Heart left ventricle (tissue), 16 donors: ENCODE measurements at regions of chr4 and their contacts with region 1.

Region 1: DNA sequence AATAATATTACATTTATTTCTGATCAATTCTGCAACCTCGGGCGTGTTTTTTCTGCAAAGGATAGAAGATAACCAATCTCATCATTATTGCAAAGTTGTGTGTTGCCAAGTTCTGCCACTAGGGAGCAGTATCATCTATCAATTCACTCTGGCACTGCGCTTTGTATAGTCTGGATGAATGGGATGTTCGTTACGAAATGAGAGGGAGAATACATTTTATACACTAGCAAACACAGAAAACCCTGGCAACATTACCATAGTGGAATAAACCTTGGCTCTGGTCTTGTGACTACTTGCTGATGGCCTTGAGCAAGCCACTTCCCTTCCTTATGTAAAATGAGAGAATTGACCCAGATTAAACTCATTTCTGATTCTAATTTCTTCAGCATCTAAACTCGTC is 97.5 kb upstream of the ZNF518B start:
- DNase-seq: peak in 2 of 5 donors; percentile 16 to 23
- ATAC-seq: peak in 3 of 4 donors; percentile 37 to 74 (median 67)
- H3K4me3 ChIP-seq: no peak overlapping the region
- H3K27ac ChIP-seq: no peak overlapping the region
- H3K4me1 ChIP-seq: no peaks in the 10 kb centered on the region
- H3K27me3 ChIP-seq: peaks cover 0 to 14% (median 0%) of the 10 kb centered on the region in 9 donors
- CTCF ChIP-seq: peak; percentile 58 to 86 (median 76)
- POLR2A ChIP-seq: no peak

Region 2: GRCh38 chr4:10157478-10158332 is 397.0 kb before region 1 on chr4:
- intact Hi-C with region 1: loop called (anchors 2 to 5 kb)
- DNase-seq: peak in 4 of 5 donors; percentile 35 to 50 (median 44)
- ATAC-seq: peak; percentile 64 to 81 (median 72)
- H3K4me3 ChIP-seq: no peak overlapping the region
- H3K27ac ChIP-seq: peak overlapping the region in 1 of 12 donors; percentile 71
- H3K4me1 ChIP-seq: peaks cover 0 to 3% (median 0%) of the 10 kb centered on the region in 12 donors
- H3K27me3 ChIP-seq: peaks cover 0 to 3% (median 0%) of the 10 kb centered on the region in 9 donors
- CTCF ChIP-seq: peak; percentile 70 to 85 (median 78)
- POLR2A ChIP-seq: no peak

Region 3: GRCh38 chr4:10164877-10165283 is 389.8 kb before region 1 on chr4:
- intact Hi-C with region 1: loop called in 3 of 10 experiments (anchors 2 to 5 kb)
- DNase-seq: peak in 1 of 5 donors; percentile 33
- ATAC-seq: peak in 1 of 4 donors; percentile 36
- H3K4me3 ChIP-seq: no peak overlapping the region
- H3K27ac ChIP-seq: no peak overlapping the region
- H3K4me1 ChIP-seq: peaks cover 0 to 11% (median 0%) of the 10 kb centered on the region in 12 donors
- H3K27me3 ChIP-seq: no peaks in the 10 kb centered on the region
- CTCF ChIP-seq: peak; percentile 47 to 73 (median 64)
- POLR2A ChIP-seq: no peak

Region 4: GRCh38 chr4:10403633-10404445 is 150.9 kb before region 1 on chr4:
- intact Hi-C with region 1: loop called in 5 of 10 experiments (anchors 5 to 10 kb)
- DNase-seq: no peak
- ATAC-seq: peak; percentile 37 to 64 (median 46)
- H3K4me3 ChIP-seq: no peak overlapping the region
- H3K27ac ChIP-seq: no peak overlapping the region
- H3K4me1 ChIP-seq: peaks cover 0 to 4% (median 0%) of the 10 kb centered on the region in 12 donors
- H3K27me3 ChIP-seq: no peaks in the 10 kb centered on the region
- CTCF ChIP-seq: peak; percentile 24 to 65 (median 52)
- POLR2A ChIP-seq: no peak

Region 5: DNA sequence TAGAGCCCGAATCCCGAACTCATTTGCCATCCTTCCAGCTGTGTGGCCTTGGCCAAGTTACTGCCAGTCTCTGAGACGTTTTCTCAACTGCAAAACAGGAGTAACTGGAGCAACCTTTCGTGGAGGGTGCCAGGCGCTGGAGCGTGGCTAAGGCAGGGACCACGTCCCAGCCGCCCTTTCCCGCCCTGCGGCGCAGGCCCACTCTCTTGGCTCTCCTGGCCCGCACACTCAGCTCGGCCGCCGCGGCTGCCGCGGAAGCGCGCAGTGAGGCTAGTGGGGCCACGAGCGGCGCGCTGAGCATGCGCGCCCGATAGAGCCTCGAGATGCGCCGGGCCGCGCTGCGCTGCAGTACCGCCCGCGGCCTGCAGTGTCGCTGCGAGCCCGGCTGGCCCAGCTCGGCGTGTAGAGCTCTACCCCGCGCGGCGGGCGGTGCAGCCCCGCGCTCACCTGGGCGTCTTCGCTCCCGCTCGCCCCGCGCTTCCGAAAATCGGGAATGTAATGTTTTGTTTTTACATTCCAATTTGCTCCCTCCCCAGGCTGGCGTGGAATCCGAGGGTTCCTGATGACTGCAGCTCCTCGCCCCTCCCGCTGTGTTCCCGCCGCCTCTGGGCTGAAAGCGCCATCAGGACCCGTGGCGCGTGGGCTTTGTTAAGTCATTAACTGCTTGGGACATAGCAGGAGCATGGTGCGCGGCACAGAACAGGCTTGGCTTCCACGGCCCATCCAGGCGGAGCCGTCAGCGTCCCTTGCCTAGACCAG is 93.4 kb before region 1 on chr4:
- intact Hi-C with region 1: loop called in 6 of 10 experiments (anchors 5 kb)
- DNase-seq: peak; percentile 35 to 86 (median 45)
- ATAC-seq: peak; percentile 57 to 89 (median 86)
- H3K4me3 ChIP-seq: peak overlapping the region in 11 of 12 donors; percentile 1 to 47 (median 34)
- H3K27ac ChIP-seq: no peak overlapping the region
- H3K4me1 ChIP-seq: peaks cover 0 to 21% (median 5%) of the 10 kb centered on the region in 12 donors
- H3K27me3 ChIP-seq: peaks cover 6 to 55% (median 21%) of the 10 kb centered on the region in 9 donors
- CTCF ChIP-seq: peak; percentile 78 to 97 (median 94)
- POLR2A ChIP-seq: no peak

Region 6: GRCh38 chr4:10684631-10685030 is 129.9 kb after region 1 on chr4 and contains the start of gene CLNK:
- intact Hi-C with region 1: no loop called
- DNase-seq: no peak
- ATAC-seq: no peak
- H3K4me3 ChIP-seq: no peak within 1 kb of the TSS
- H3K27ac ChIP-seq: no peak within 1 kb of the TSS
- H3K4me1 ChIP-seq: no peaks in the 10 kb centered on the region
- H3K27me3 ChIP-seq: no peaks in the 10 kb centered on the region
- CTCF ChIP-seq: no peak
- POLR2A ChIP-seq: no peak
- total RNA-seq, gene CLNK: 0.11 to 0.16 TPM in 2 of 9 donors, not detected in the others

Region 7: DNA sequence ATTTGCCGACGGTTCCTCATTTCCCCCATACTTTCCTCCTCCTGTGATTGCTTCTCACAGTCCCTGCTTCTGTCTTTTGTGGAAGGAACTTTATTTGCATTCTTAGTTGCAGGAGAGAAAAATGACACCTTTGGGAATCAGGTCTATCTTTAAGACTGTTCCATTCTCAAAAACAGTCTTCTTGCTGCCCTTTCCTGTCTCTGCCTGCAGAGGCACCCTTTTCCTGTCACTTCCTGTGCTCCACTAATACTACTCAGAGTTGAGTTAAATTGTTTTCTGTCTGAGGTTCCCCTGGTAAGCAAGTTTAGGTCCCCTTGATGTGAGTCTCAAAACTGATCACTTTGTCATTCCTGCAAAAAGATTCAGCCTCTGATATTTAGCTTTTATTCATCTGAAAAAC is 338.7 kb after region 1 on chr4:
- intact Hi-C with region 1: no loop called
- DNase-seq: no peak
- ATAC-seq: no peak
- H3K4me3 ChIP-seq: no peak overlapping the region
- H3K27ac ChIP-seq: no peak overlapping the region
- H3K4me1 ChIP-seq: no peaks in the 10 kb centered on the region
- H3K27me3 ChIP-seq: peaks cover 0 to 4% (median 0%) of the 10 kb centered on the region in 9 donors
- CTCF ChIP-seq: peak in 7 of 12 donors; percentile 8 to 44 (median 33)
- POLR2A ChIP-seq: no peak

Region 8: DNA sequence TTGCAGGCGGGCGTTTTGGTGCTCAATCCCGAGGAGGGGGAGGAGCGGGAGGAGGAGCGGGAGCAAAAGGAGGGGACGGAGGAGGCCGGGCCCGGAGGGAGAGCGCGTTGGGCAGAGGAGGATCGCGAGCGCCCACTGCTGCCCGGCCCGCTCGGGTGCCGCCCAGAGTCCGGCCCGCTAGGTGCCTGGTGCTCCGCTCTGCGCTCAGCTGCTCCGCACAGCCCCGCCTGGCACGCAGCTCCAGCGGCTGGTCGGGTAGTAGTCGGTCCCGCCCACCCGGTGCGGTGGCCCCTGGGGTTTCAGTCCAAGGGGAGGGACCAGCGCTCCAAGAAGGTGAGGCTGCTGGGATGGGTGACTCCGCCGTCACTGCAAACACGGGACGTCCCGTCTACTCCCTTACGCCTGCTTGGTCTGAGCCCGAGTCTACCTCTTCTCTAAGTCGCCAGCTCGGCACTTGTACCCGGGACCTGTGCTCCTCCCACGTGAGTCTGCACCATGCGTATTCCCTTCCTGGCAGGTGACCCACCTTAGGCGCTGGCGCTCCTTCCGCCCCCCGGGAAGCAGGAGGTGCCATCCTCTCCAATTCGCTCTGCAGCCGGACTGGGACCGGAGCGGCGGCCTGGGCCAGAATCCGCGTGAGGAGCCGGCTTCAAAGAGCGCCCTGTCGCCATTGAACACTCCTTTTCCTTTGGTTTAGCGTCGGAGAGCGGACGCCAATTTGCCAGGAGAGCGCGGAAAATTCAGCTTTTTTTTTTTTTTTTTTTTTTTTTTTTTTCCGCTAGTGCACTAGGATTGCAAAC is 874.4 kb after region 1 on chr4:
- intact Hi-C with region 1: loop called in 1 of 10 experiments (anchors 10 kb)
- DNase-seq: peak; percentile 80 to 90 (median 83)
- ATAC-seq: peak; percentile 81 to 98 (median 96)
- H3K4me3 ChIP-seq: peak overlapping the region; percentile 32 to 75 (median 64)
- H3K27ac ChIP-seq: peak overlapping the region in 8 of 12 donors; percentile 5 to 55 (median 31)
- H3K4me1 ChIP-seq: peaks cover 0 to 27% (median 18%) of the 10 kb centered on the region in 12 donors
- H3K27me3 ChIP-seq: peaks cover 0 to 24% (median 12%) of the 10 kb centered on the region in 9 donors
- CTCF ChIP-seq: peak; percentile 48 to 84 (median 64)
- POLR2A ChIP-seq: no peak